ENCODE measurements at regions of chr1 and their contacts with region 1.

Region 1: GRCh38 chr1:161936786-161937185 is 86.9 kb downstream of the OLFML2B start:
- DNase-seq: no peak
- ATAC-seq: no peak
- H3K4me3 ChIP-seq: no peak overlapping the region
- H3K27ac ChIP-seq: no peak overlapping the region
- H3K4me1 ChIP-seq: no peaks in the 10 kb centered on the region
- H3K27me3 ChIP-seq: no peaks in the 10 kb centered on the region
- CTCF ChIP-seq: no peak

Region 2: DNA sequence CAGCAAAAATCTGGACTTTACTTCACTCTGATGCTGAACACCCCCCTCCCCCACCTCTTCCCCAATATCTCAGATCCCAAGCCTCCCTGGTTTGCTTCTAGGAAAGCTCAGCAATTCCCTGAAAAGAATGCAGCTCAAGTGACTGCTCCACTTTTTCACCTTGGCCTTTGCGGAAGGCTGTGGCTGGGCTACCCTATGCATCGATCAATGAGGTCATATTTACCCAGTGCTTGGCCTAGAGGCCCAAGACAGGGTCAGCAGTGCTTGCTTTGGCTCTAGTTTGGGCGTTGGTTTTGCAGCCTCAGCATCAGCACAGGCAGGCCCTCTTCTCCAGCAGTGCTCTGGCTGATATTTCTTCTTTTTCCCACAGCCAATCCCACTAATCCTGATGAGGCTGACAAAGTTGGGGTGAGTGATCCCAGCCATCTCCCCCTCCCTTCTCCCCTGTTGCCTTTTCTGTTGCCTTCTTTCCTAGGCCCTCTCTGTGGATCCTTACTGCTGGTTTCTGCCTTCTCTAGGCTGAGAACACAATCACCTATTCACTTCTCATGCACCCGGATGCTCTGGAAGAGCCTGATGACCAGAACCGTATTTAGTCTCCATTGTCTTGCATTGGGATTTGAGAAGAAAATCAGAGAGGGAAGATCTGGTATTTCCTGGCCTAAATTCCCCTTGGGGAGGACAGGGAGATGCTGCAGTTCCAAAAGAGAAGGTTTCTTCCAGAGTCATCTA is 259.7 kb before region 1 on chr1:
- CTCF ChIA-PET with region 1: no interaction called
- POLR2A ChIA-PET with region 1: no interaction called
- in situ Hi-C with region 1: no loop called
- intact Hi-C with region 1: no loop called
- DNase-seq: no peak
- ATAC-seq: no peak
- H3K4me3 ChIP-seq: no peak overlapping the region
- H3K27ac ChIP-seq: no peak overlapping the region
- H3K4me1 ChIP-seq: no peaks in the 10 kb centered on the region
- H3K27me3 ChIP-seq: peaks cover 3% of the 10 kb centered on the region; the same call in 1 of the 2 replicates
- CTCF ChIP-seq: no peak

Region 3: DNA sequence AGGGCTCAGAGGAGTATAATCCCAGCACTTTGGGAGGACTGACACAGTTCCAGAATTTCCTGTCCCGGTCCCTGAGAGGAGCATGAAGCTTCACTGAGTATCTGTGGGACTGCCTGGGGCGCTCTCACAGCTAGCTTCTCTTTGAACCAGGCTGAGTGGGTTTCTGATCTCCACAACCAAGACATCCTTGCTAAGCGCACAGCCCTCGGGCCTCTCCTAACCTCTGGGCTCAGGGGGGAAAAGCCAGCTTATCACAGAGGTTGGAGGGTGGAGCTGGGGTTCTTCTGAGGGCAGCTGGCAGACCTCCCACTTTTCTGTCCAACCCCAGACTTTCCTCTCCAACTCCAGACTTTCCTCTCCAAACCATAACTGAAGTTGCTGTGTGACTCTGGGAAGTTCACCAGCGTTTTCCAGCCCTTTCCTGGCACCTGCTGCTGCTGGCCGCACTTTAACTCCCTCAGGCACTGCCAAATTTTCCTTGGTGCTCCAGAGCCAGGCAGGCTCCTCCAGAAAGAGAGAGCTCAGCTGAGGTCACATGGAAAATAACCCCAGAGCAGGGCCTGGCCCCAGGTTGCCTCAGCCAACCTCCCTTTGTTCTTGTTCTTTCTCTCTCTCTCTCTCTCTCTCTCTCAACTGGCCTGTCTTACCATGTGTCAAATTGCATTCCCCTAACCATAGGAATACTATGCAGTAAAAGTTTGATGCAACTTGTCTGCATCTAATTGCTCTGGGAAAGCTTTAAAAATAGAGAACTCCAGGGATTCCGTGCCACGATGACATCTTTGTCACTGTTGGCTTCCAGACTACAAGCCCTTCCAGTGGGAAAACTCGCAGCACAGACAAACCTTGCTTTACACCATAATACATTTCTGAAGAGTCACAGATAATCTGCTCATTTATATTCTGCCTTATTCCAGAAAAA is 37.4 kb after region 1 on chr1:
- CTCF ChIA-PET with region 1: no interaction called
- POLR2A ChIA-PET with region 1: no interaction called
- in situ Hi-C with region 1: no loop called
- intact Hi-C with region 1: no loop called
- DNase-seq: no peak
- ATAC-seq: no peak
- H3K4me3 ChIP-seq: no peak overlapping the region
- H3K27ac ChIP-seq: no peak overlapping the region
- H3K4me1 ChIP-seq: no peaks in the 10 kb centered on the region
- H3K27me3 ChIP-seq: peaks cover 15% of the 10 kb centered on the region
- CTCF ChIP-seq: no peak

Region 4: DNA sequence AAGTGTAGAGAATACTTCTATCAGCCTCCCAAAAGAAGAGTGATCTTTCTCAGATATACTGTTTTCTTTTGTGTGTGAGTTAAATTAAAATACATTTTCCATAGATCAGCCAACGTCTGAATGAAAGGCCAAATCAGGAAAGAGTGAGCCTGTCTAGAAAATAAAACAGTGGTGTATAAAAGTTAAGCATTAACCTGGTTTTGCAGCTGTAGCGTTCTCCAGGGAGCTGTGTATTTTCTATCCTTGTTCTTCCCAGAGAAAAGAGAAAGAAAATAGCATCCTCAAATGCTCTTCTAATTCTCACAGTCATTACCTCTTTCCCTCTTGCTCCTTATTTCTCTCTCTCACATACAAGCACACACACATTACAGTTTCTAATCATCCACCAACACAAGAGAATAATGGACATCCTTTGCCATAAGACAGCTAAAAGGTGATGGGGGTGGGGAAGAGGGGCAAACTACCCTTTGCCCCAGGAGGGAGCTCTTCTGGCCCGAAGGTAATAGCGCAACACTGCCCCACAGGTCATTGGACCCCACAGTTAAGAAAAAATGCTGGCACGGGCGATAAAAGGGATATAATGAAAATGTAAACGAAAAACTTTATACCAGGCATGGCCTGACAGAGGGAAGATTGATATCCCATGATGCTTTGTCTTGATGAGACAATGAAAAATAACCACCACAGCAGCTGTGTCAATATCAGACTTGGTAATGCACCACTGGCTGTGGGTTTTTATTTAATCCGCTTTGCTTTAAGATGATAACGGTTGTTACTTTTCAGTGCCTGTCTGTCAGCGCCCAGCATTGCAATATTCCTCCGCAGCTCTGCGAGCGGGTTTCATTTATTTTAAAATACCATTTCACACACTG is 1535.2 kb after region 1 on chr1:
- CTCF ChIA-PET with region 1: no interaction called
- POLR2A ChIA-PET with region 1: interaction called, 13 read pairs
- in situ Hi-C with region 1: no loop called
- intact Hi-C with region 1: no loop called
- DNase-seq: no peak
- ATAC-seq: no peak
- H3K4me3 ChIP-seq: no peak overlapping the region
- H3K27ac ChIP-seq: no peak overlapping the region
- H3K4me1 ChIP-seq: no peaks in the 10 kb centered on the region
- H3K27me3 ChIP-seq: no peaks in the 10 kb centered on the region
- CTCF ChIP-seq: no peak

Measured in Panc1 (cell line).